CD8-positive, alpha-beta T cell (primary cell): ENCODE measurements at regions of chr19 and their contacts with region 1.

Region 1: DNA sequence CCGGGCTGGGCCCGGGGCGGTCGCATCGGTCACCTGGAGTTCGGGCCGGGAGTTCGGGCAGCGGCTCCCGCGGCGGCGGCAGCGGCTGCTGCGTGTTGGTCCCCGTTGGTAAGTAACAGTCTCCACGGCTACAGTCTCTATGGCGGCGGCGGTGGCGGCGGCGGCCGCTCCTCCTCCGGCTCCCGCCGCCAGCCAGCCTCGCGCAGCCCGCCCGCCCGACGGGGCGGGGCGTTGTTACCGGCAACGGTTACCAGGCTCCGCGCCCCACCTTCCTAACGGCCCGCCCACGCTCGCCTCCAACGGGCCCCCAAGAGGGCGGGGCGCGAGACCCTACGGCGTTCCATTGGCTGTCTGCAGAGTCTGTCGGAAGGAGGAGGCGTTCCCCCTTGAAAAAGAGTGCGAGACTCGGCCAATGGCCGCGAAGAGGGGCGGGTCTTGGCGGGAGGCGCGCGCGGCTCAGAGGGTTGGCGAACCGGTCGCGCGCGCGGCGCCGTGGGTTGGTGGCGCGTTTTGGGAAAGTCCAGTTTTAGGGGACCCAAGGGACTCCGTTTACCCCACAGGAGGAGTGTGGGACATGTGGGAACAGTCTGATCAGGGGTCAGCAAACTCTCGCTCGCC is at the start of gene RFX2:
- DNase-seq: peak; percentile 98 to 99 (median 99)
- ATAC-seq: peak; percentile 97
- H3K4me3 ChIP-seq: peak within 1 kb of the TSS; percentile 59
- H3K4me3 Mint-ChIP-seq: peak within 1 kb of the TSS; percentile 89
- H3K27ac ChIP-seq: peak within 1 kb of the TSS; percentile 52 to 58
- H3K27ac Mint-ChIP-seq: peak within 1 kb of the TSS; percentile 80
- H3K4me1 ChIP-seq: peaks cover 14% of the 10 kb centered on the region
- H3K4me1 Mint-ChIP-seq: peaks cover 17% of the 10 kb centered on the region
- H3K27me3 ChIP-seq: peaks cover 0 to 13% of the 10 kb centered on the region in 2 experiments
- H3K27me3 Mint-ChIP-seq: peaks cover 3% of the 10 kb centered on the region
- CTCF ChIP-seq: no peak
- total RNA-seq, gene RFX2: 9.0 to 12.4 TPM

Region 2: GRCh38 chr19:5790573-5791520 is 319.6 kb before region 1 on chr19 and contains the start of gene DUS3L:
- CTCF ChIA-PET with region 1: no interaction called
- POLR2A ChIA-PET with region 1: no interaction called
- intact Hi-C with region 1: loop called in 1 of 2 experiments (anchors 1 kb)
- DNase-seq: peak; percentile 91 to 98 (median 94)
- ATAC-seq: peak; percentile 95
- H3K4me3 ChIP-seq: peak within 1 kb of the TSS; percentile 86 to 91
- H3K4me3 Mint-ChIP-seq: peak within 1 kb of the TSS; percentile 97
- H3K27ac ChIP-seq: peak within 1 kb of the TSS; percentile 94 to 97
- H3K27ac Mint-ChIP-seq: peak within 1 kb of the TSS; percentile 99
- H3K4me1 ChIP-seq: peaks cover 7% of the 10 kb centered on the region
- H3K4me1 Mint-ChIP-seq: peaks cover 17% of the 10 kb centered on the region
- H3K27me3 ChIP-seq: no peaks in the 10 kb centered on the region
- H3K27me3 Mint-ChIP-seq: peaks cover 2% of the 10 kb centered on the region
- CTCF ChIP-seq: no peak
- total RNA-seq, gene DUS3L: 174 to 192 TPM

Region 3: DNA sequence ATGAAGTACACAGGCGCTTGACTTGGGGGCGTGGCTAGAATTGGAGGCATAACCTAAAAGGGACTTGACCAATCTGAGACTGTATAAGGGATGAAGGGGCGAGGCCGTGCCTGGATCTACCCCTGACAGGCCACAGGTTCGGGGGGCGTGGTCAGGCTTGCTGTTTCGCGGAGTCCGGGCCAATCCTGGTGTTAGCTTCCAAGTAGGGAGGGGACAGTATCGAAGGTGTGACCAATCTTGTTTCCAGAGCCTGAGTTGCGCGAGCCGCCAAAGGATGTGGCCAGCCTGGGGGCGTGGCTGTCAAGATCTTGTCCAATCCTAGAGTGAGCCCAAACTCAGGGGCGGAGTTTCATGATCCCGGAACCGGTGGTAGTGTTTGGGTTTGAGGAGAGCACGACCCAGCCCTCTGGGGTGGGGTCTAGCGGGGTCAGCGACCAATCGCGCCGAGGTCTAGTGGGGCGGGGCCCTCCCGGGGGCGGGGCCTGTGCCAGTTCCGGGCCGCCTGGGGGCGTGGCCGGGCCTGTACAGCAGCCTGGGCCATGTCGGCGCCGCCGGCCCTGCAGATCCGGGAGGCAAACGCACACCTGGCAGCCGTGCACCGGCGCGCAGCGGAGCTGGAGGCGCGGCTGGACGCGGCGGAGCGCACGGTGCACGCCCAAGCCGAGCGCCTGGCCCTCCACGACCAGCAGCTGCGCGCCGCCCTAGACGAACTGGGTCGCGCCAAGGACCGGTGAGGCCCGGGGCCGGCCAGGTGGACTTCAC is 205.9 kb before region 1 on chr19 and contains the start of gene VMAC:
- CTCF ChIA-PET with region 1: no interaction called
- POLR2A ChIA-PET with region 1: no interaction called
- intact Hi-C with region 1: loop called (anchors 1 kb)
- DNase-seq: peak; percentile 100
- ATAC-seq: peak; percentile 77
- H3K4me3 ChIP-seq: peak within 1 kb of the TSS; percentile 93 to 100
- H3K4me3 Mint-ChIP-seq: peak within 1 kb of the TSS; percentile 90
- H3K27ac ChIP-seq: peak within 1 kb of the TSS; percentile 90 to 92
- H3K27ac Mint-ChIP-seq: peak within 1 kb of the TSS; percentile 99
- H3K4me1 ChIP-seq: peaks cover 22% of the 10 kb centered on the region
- H3K4me1 Mint-ChIP-seq: peaks cover 31% of the 10 kb centered on the region
- H3K27me3 ChIP-seq: no peaks in the 10 kb centered on the region
- H3K27me3 Mint-ChIP-seq: no peaks in the 10 kb centered on the region
- CTCF ChIP-seq: no peak
- total RNA-seq, gene VMAC: 17.4 to 18.6 TPM

Region 4: DNA sequence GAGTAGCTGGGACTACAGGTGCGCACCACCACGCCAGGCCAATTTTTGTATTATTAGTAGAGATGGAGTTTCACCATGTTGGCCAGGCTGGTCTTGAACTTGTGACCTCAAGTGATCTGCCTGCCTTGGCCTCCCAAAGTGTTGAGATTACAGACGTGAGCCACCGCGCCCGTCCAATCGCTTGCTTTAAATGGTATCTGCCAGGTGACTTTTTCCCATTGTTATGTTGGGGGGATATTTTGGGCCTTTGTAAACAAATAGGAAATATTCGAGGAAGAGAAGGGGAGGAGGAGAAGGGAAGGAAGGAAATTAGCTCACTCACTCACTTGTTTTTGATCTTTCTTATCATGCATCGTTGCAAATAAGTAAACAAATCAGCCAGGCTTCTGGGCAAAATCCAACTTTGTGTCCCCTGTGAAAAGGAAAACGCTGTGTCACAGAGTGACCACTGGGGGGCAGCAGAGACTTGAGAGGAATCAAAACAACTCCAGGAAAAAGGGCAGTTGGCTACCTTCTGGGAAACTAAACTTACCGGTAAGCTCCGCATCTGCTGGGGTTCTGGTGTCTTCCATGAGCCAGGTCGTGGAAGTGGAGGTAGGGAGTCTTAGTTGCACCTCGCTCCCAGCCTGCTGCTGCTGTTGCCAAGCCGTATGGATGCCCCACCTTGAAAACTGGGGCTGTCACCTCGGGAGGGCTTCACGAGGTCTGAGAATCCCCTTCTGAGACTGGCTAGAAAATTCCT is 123.2 kb before region 1 on chr19:
- CTCF ChIA-PET with region 1: no interaction called
- POLR2A ChIA-PET with region 1: no interaction called
- intact Hi-C with region 1: loop called in 1 of 2 experiments (anchors 5 kb)
- DNase-seq: peak; percentile 41 to 85 (median 74)
- ATAC-seq: peak; percentile 71
- H3K4me3 ChIP-seq: peak overlapping the region; percentile 36 to 41
- H3K4me3 Mint-ChIP-seq: peak overlapping the region; percentile 79
- H3K27ac ChIP-seq: no peak overlapping the region
- H3K27ac Mint-ChIP-seq: no peak overlapping the region
- H3K4me1 ChIP-seq: peaks cover 5% of the 10 kb centered on the region
- H3K4me1 Mint-ChIP-seq: peaks cover 26% of the 10 kb centered on the region
- H3K27me3 ChIP-seq: no peaks in the 10 kb centered on the region
- H3K27me3 Mint-ChIP-seq: no peaks in the 10 kb centered on the region
- CTCF ChIP-seq: peak; percentile 93

Region 5: GRCh38 chr19:6066661-6067646 is 43.5 kb before region 1 on chr19:
- CTCF ChIA-PET with region 1: interaction called, 3 read pairs
- POLR2A ChIA-PET with region 1: interaction called, 3 read pairs
- intact Hi-C with region 1: loop called (anchors 5 kb)
- DNase-seq: peak in 4 of 9 experiments; percentile 29 to 62 (median 45)
- ATAC-seq: no peak
- H3K4me3 ChIP-seq: no peak overlapping the region
- H3K4me3 Mint-ChIP-seq: no peak overlapping the region
- H3K27ac ChIP-seq: no peak overlapping the region
- H3K27ac Mint-ChIP-seq: peak overlapping the region; percentile 33
- H3K4me1 ChIP-seq: peaks cover 20% of the 10 kb centered on the region
- H3K4me1 Mint-ChIP-seq: peaks cover 36% of the 10 kb centered on the region
- H3K27me3 ChIP-seq: no peaks in the 10 kb centered on the region
- H3K27me3 Mint-ChIP-seq: no peaks in the 10 kb centered on the region
- CTCF ChIP-seq: no peak

Region 6: DNA sequence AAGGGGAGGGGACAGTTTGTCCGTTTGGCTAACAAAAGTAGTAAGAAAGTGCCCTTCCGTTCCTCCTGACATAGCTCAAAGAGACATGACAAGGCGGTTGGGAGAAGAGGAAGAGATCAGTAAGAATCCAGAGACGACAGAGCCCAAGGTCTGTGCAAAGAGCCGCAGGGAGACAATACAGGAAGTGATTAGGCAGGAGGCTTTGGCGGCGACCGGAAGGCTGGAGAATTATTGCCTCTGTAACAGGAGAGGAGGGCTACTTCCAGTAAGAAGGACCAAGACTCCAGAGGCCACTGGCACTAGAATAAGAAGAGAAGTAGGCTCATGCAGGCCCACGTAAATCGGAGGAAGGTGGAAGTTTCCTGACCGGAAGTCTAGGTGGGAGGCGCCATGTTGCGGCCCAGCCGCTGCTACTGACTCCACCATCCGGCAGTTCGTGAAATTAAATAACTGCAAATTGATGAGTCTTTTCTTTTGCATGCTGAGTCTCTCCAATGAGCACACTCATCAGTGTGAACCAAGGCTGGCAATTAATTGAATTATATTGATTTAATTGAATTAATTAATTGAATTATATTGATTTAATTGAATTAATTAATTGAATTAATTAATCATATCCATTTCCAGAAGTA is 10.1 kb before region 1 on chr19:
- CTCF ChIA-PET with region 1: interaction called, 8 read pairs
- POLR2A ChIA-PET with region 1: no interaction called
- intact Hi-C with region 1: loop called in 1 of 2 experiments (anchors 1 kb)
- DNase-seq: peak in 5 of 9 experiments; percentile 20 to 73 (median 43)
- ATAC-seq: peak; percentile 36
- H3K4me3 ChIP-seq: peak overlapping the region; percentile 35 to 40
- H3K4me3 Mint-ChIP-seq: peak overlapping the region; percentile 74
- H3K27ac ChIP-seq: peak overlapping the region in 1 of 2 experiments; percentile 48
- H3K27ac Mint-ChIP-seq: peak overlapping the region; percentile 72
- H3K4me1 ChIP-seq: peaks cover 4% of the 10 kb centered on the region
- H3K4me1 Mint-ChIP-seq: peaks cover 15% of the 10 kb centered on the region
- H3K27me3 ChIP-seq: no peaks in the 10 kb centered on the region
- H3K27me3 Mint-ChIP-seq: no peaks in the 10 kb centered on the region
- CTCF ChIP-seq: no peak

Region 7: GRCh38 chr19:6260912-6261650 is 150.6 kb after region 1 on chr19:
- CTCF ChIA-PET with region 1: no interaction called
- POLR2A ChIA-PET with region 1: no interaction called
- intact Hi-C with region 1: no loop called
- DNase-seq: peak in 8 of 9 experiments; percentile 19 to 66 (median 42)
- ATAC-seq: peak; percentile 71
- H3K4me3 ChIP-seq: no peak overlapping the region
- H3K4me3 Mint-ChIP-seq: peak overlapping the region; percentile 43
- H3K27ac ChIP-seq: no peak overlapping the region
- H3K27ac Mint-ChIP-seq: no peak overlapping the region
- H3K4me1 ChIP-seq: peaks cover 6% of the 10 kb centered on the region
- H3K4me1 Mint-ChIP-seq: peaks cover 26% of the 10 kb centered on the region
- H3K27me3 ChIP-seq: no peaks in the 10 kb centered on the region
- H3K27me3 Mint-ChIP-seq: no peaks in the 10 kb centered on the region
- CTCF ChIP-seq: peak; percentile 62

Region 8: GRCh38 chr19:6372594-6373095 is 262.2 kb after region 1 on chr19 and contains the start of gene ALKBH7:
- CTCF ChIA-PET with region 1: no interaction called
- POLR2A ChIA-PET with region 1: no interaction called
- intact Hi-C with region 1: loop called (anchors 1 to 2 kb)
- DNase-seq: peak; percentile 90 to 100 (median 95)
- ATAC-seq: peak; percentile 75
- H3K4me3 ChIP-seq: peak within 1 kb of the TSS; percentile 67 to 86
- H3K4me3 Mint-ChIP-seq: peak within 1 kb of the TSS; percentile 92
- H3K27ac ChIP-seq: peak within 1 kb of the TSS; percentile 70 to 93
- H3K27ac Mint-ChIP-seq: peak within 1 kb of the TSS; percentile 93
- H3K4me1 ChIP-seq: peaks cover 12% of the 10 kb centered on the region
- H3K4me1 Mint-ChIP-seq: peaks cover 14% of the 10 kb centered on the region
- H3K27me3 ChIP-seq: no peaks in the 10 kb centered on the region
- H3K27me3 Mint-ChIP-seq: no peaks in the 10 kb centered on the region
- CTCF ChIP-seq: no peak
- total RNA-seq, gene ALKBH7: 63.6 to 66.2 TPM